Activated B cell treated with CpG ODN at 0.5 μM for 24 hours (primary cell): ENCODE measurements at regions of chr9 and their contacts with region 1.

Region 1: DNA sequence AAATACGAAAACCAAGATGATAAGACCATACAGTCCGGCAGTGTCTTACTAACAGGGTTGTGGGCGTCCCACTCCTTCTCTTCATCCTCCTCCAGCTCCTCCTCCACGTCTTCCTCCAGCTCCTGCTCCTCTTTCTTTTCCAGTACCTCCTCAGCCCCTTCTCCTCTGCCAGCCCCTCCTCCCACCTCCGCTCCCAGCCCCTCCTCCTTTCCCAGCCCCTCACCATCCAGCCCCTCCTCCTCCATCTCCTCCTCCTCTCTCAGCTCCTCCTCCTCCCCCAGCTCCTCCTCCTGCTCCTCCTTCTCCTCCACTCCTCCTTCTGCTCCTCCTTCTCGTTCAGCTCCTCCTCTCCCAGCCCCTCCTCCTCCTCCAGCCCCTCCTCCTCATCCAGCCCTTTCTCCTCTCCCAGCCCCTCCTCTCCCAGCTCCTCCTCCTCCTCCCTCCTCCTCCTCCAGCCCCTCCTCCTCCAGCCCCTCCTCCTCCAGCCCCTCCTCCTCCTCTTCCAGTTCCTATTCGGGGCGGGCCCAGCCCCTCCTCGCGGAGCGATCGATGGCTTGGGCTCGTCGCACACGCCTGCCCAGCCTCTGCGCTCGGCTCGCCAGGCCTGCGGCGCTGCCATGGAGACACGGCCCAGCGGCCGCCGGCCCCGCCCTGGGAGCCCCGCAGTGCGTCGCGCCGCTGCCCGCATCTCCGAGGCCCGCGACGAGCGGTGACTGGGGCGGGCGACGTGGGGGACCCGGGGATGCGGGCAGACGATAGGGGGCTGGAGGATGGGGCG is at the start of gene BRD3OS:
- DNase-seq: peak; percentile 85
- ATAC-seq: peak; percentile 94
- H3K4me3 Mint-ChIP-seq: peak within 1 kb of the TSS; percentile 83
- H3K27ac Mint-ChIP-seq: peak within 1 kb of the TSS; percentile 61
- H3K4me1 Mint-ChIP-seq: peaks cover 16% of the 10 kb centered on the region
- H3K27me3 Mint-ChIP-seq: no peaks in the 10 kb centered on the region
- CTCF ChIP-seq: no peak
- total RNA-seq, gene BRD3OS: 17.3 and 19.3 TPM in 2 replicates

Region 2: GRCh38 chr9:133787754-133788025 is 237.3 kb before region 1 on chr9:
- CTCF ChIA-PET with region 1: interaction called, 9 read pairs
- POLR2A ChIA-PET with region 1: interaction called, 3 read pairs
- intact Hi-C with region 1: loop called (anchors 1 kb)
- DNase-seq: peak; percentile 39
- ATAC-seq: peak; percentile 80
- H3K4me3 Mint-ChIP-seq: no peak overlapping the region
- H3K27ac Mint-ChIP-seq: peak overlapping the region; percentile 68
- H3K4me1 Mint-ChIP-seq: peaks cover 90% of the 10 kb centered on the region
- H3K27me3 Mint-ChIP-seq: no peaks in the 10 kb centered on the region
- CTCF ChIP-seq: no peak

Region 3: GRCh38 chr9:133972041-133972941 is 52.7 kb before region 1 on chr9:
- CTCF ChIA-PET with region 1: no interaction called
- POLR2A ChIA-PET with region 1: no interaction called
- intact Hi-C with region 1: no loop called
- DNase-seq: no peak
- ATAC-seq: no peak
- H3K4me3 Mint-ChIP-seq: peak overlapping the region; percentile 50
- H3K27ac Mint-ChIP-seq: peak overlapping the region; percentile 87
- H3K4me1 Mint-ChIP-seq: peaks cover 88% of the 10 kb centered on the region
- H3K27me3 Mint-ChIP-seq: no peaks in the 10 kb centered on the region
- CTCF ChIP-seq: no peak

Region 4: DNA sequence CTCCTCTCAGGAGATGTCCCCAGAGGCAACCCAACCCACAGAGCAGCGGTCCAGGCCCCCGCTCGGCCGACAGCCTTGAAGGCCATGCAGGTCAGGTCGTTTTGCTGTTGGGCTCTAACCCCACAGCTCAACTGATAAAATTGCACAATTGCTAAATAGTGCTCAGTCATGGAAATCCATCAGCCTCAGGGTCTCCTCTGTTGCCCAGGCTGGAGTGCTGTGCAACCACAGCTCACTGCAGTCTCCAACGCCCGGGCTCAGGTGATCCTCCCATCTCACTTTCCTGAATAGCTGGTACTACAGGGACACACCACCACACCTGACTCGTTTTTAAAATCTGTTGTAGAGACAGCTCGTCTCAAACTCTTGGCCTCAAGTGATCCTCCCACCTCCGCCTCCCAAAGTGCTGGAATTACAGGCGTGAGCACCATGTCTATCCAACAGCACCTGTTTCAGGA is 18.5 kb after region 1 on chr9:
- CTCF ChIA-PET with region 1: no interaction called
- POLR2A ChIA-PET with region 1: no interaction called
- intact Hi-C with region 1: no loop called
- DNase-seq: no peak
- ATAC-seq: no peak
- H3K4me3 Mint-ChIP-seq: no peak overlapping the region
- H3K27ac Mint-ChIP-seq: no peak overlapping the region
- H3K4me1 Mint-ChIP-seq: no peaks in the 10 kb centered on the region
- H3K27me3 Mint-ChIP-seq: no peaks in the 10 kb centered on the region
- CTCF ChIP-seq: no peak

Region 5: GRCh38 chr9:134059661-134060395 is 34.8 kb after region 1 on chr9:
- CTCF ChIA-PET with region 1: no interaction called
- POLR2A ChIA-PET with region 1: interaction called, 4 read pairs
- intact Hi-C with region 1: loop called (anchors 1 kb)
- DNase-seq: peak; percentile 52
- ATAC-seq: peak; percentile 96
- H3K4me3 Mint-ChIP-seq: peak overlapping the region; percentile 50
- H3K27ac Mint-ChIP-seq: no peak overlapping the region
- H3K4me1 Mint-ChIP-seq: peaks cover 61% of the 10 kb centered on the region
- H3K27me3 Mint-ChIP-seq: no peaks in the 10 kb centered on the region
- CTCF ChIP-seq: no peak

Region 6: GRCh38 chr9:134135343-134136118 is 110.5 kb after region 1 on chr9 and contains the start of gene WDR5:
- CTCF ChIA-PET with region 1: no interaction called
- POLR2A ChIA-PET with region 1: interaction called, 7 read pairs
- intact Hi-C with region 1: loop called (anchors 2 kb)
- DNase-seq: peak; percentile 89
- ATAC-seq: peak; percentile 87
- H3K4me3 Mint-ChIP-seq: peak within 1 kb of the TSS; percentile 89
- H3K27ac Mint-ChIP-seq: peak within 1 kb of the TSS; percentile 90
- H3K4me1 Mint-ChIP-seq: peaks cover 35% of the 10 kb centered on the region
- H3K27me3 Mint-ChIP-seq: no peaks in the 10 kb centered on the region
- CTCF ChIP-seq: no peak
- total RNA-seq, gene WDR5: 20.8 and 22.4 TPM in 2 replicates

Region 7: GRCh38 chr9:134399435-134400056 is 374.5 kb after region 1 on chr9:
- CTCF ChIA-PET with region 1: no interaction called
- POLR2A ChIA-PET with region 1: no interaction called
- intact Hi-C with region 1: loop called (anchors 10 kb)
- DNase-seq: no peak
- ATAC-seq: no peak
- H3K4me3 Mint-ChIP-seq: no peak overlapping the region
- H3K27ac Mint-ChIP-seq: no peak overlapping the region
- H3K4me1 Mint-ChIP-seq: peaks cover 47% of the 10 kb centered on the region
- H3K27me3 Mint-ChIP-seq: no peaks in the 10 kb centered on the region
- CTCF ChIP-seq: no peak